Activated CD4-positive, alpha-beta T cell treated with anti-CD3 and anti-CD28 coated beads for 36 hours (primary cell): ENCODE measurements at regions of chrX and their contacts with region 1.

Region 1: GRCh38 chrX:154397819-154398724 is at the start of gene RPL10:
- DNase-seq: peak; percentile 94
- ATAC-seq: peak; percentile 80
- H3K4me3 Mint-ChIP-seq: peak within 1 kb of the TSS; percentile 99
- H3K27ac Mint-ChIP-seq: peak within 1 kb of the TSS; percentile 100
- H3K4me1 Mint-ChIP-seq: no peaks in the 10 kb centered on the region
- H3K27me3 Mint-ChIP-seq: no peaks in the 10 kb centered on the region
- total RNA-seq, gene RPL10: 1,286 to 2,705 TPM

Region 2: GRCh38 chrX:153724252-153725040 is 673.6 kb before region 1 on chrX and contains the starts of genes ABCD1 and BCAP31:
- CTCF ChIA-PET with region 1: no interaction called
- POLR2A ChIA-PET with region 1: no interaction called
- intact Hi-C with region 1: loop called in 1 of 2 experiments (anchors 1 kb)
- DNase-seq: peak; percentile 93
- ATAC-seq: peak; percentile 84
- H3K4me3 Mint-ChIP-seq: peak within 1 kb of the TSS; percentile 89
- H3K27ac Mint-ChIP-seq: peak within 1 kb of the TSS; percentile 87
- H3K4me1 Mint-ChIP-seq: peaks cover 20% of the 10 kb centered on the region
- H3K27me3 Mint-ChIP-seq: no peaks in the 10 kb centered on the region
- total RNA-seq, gene ABCD1: 4.5 to 4.8 TPM
- total RNA-seq, gene BCAP31: 78.0 to 106 TPM

Region 3: GRCh38 chrX:154411322-154411980 is 13.4 kb after region 1 on chrX and contains the start of gene TAFAZZIN:
- CTCF ChIA-PET with region 1: interaction called, 9 read pairs
- POLR2A ChIA-PET with region 1: interaction called, 7 read pairs
- intact Hi-C with region 1: loop called in 1 of 2 experiments (anchors 1 kb)
- DNase-seq: peak; percentile 87
- ATAC-seq: peak; percentile 73
- H3K4me3 Mint-ChIP-seq: peak within 1 kb of the TSS; percentile 86
- H3K27ac Mint-ChIP-seq: peak within 1 kb of the TSS; percentile 94
- H3K4me1 Mint-ChIP-seq: peaks cover 13% of the 10 kb centered on the region
- H3K27me3 Mint-ChIP-seq: no peaks in the 10 kb centered on the region
- total RNA-seq, gene TAFAZZIN: 43.8 to 49.0 TPM

Region 4: GRCh38 chrX:154436983-154437719 is 39.1 kb after region 1 on chrX and contains the start of gene GDI1:
- CTCF ChIA-PET with region 1: no interaction called
- POLR2A ChIA-PET with region 1: no interaction called
- intact Hi-C with region 1: loop called in 1 of 2 experiments (anchors 2 kb)
- DNase-seq: peak; percentile 69
- ATAC-seq: peak; percentile 40
- H3K4me3 Mint-ChIP-seq: peak within 1 kb of the TSS; percentile 83
- H3K27ac Mint-ChIP-seq: peak within 1 kb of the TSS; percentile 87
- H3K4me1 Mint-ChIP-seq: peaks cover 22% of the 10 kb centered on the region
- H3K27me3 Mint-ChIP-seq: no peaks in the 10 kb centered on the region
- total RNA-seq, gene GDI1: 100 to 117 TPM

Region 5: GRCh38 chrX:154490414-154491083 is 92.5 kb after region 1 on chrX and contains the start of gene SLC10A3:
- CTCF ChIA-PET with region 1: no interaction called
- POLR2A ChIA-PET with region 1: interaction called, 4 read pairs
- intact Hi-C with region 1: loop called in 1 of 2 experiments (anchors 1 kb)
- DNase-seq: peak; percentile 94
- ATAC-seq: peak; percentile 91
- H3K4me3 Mint-ChIP-seq: peak within 1 kb of the TSS; percentile 85
- H3K27ac Mint-ChIP-seq: peak within 1 kb of the TSS; percentile 89
- H3K4me1 Mint-ChIP-seq: peaks cover 17% of the 10 kb centered on the region
- H3K27me3 Mint-ChIP-seq: no peaks in the 10 kb centered on the region
- total RNA-seq, gene SLC10A3: 10.4 to 11.3 TPM

Region 6: DNA sequence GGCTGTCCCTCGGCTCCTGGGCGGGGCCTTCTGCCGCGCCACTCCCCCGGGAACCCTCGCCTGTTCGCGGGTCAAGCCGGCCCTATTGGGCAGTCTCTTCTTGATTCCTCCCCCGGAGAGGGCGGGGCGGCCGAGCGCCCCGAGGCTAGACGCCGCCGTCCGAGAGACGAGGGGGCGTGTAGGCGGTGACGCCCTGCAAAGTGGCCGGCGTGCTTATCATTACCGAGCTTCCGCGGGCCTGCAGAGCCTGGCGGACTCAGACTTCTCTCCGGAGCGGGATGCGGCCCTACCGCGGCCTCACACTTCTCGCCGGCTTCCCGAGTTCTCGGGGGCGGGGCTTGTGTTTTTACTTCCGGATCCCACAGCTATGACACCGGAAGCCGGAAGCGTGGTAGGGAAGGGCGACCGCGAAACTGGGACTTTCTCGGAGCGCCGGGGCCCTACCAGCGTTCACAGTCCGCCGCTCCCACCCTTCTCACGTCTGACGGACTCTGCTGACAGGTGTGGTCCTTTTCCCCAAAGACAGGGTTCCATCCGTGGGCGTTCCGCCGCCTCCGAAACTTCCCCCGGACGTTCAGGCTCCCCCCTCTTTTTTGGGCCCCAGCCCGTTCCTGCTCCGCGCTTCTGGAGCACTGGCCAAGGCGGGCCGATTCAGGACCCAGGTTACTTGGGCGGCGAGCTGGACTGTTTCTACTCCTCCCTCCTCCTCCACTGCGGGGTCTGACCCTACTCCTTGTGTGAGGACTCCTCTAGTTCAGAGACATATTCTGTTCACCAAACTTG is 149.4 kb after region 1 on chrX and contains the start of gene IKBKG:
- CTCF ChIA-PET with region 1: no interaction called
- POLR2A ChIA-PET with region 1: no interaction called
- intact Hi-C with region 1: loop called in 1 of 2 experiments (anchors 1 kb)
- DNase-seq: peak; percentile 92
- ATAC-seq: peak; percentile 81
- H3K4me3 Mint-ChIP-seq: peak within 1 kb of the TSS; percentile 99
- H3K27ac Mint-ChIP-seq: peak within 1 kb of the TSS; percentile 97
- H3K4me1 Mint-ChIP-seq: peaks cover 39% of the 10 kb centered on the region
- H3K27me3 Mint-ChIP-seq: no peaks in the 10 kb centered on the region
- total RNA-seq, gene IKBKG: 32.7 to 33.0 TPM